ENCODE measurements at regions of chr3 and their contacts with region 1.

Region 1: GRCh38 chr3:44198284-44199269 is 43.1 kb upstream of the TOPAZ1 start:
- DNase-seq: peak; percentile 23 to 68 (median 62)
- ATAC-seq: peak; percentile 83
- H3K4me3 ChIP-seq: no peak overlapping the region
- H3K4me3 Mint-ChIP-seq: no peak overlapping the region
- H3K27ac ChIP-seq: no peak overlapping the region
- H3K27ac Mint-ChIP-seq: no peak overlapping the region
- H3K4me1 ChIP-seq: no peaks in the 10 kb centered on the region
- H3K4me1 Mint-ChIP-seq: no peaks in the 10 kb centered on the region
- H3K27me3 ChIP-seq: no peaks in the 10 kb centered on the region
- H3K27me3 Mint-ChIP-seq: peaks cover 16 to 25% (median 18%) of the 10 kb centered on the region in 5 donors

Region 2: DNA sequence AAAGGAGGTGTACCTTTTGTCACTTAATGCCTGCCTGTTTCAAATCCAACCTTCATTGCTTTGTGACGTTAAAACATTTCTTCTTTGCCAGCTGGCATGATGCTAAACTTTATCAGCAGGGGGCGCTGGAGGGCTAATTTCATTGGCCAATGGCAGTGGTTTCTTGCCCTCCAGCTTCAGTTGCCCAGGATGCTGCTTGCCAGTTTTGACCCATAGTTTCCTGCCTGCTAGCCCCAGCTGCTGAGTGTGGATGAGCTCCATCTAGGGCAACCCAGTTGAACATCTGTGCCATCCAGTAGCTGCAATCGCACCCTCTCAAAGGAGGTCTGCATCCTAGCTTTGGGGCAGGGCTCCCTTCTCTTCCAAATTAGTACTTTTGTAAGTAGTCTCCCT is 1367.3 kb before region 1 on chr3:
- CTCF ChIA-PET with region 1: no interaction called
- POLR2A ChIA-PET with region 1: no interaction called
- intact Hi-C with region 1: loop called in 1 of 2 experiments (anchors 5 kb)
- DNase-seq: peak; percentile 45 to 71 (median 65)
- ATAC-seq: peak; percentile 81
- H3K4me3 ChIP-seq: no peak overlapping the region
- H3K4me3 Mint-ChIP-seq: no peak overlapping the region
- H3K27ac ChIP-seq: no peak overlapping the region
- H3K27ac Mint-ChIP-seq: peak overlapping the region in 1 of 9 donors; percentile 12
- H3K4me1 ChIP-seq: no peaks in the 10 kb centered on the region
- H3K4me1 Mint-ChIP-seq: peaks cover 0 to 14% (median 5%) of the 10 kb centered on the region in 7 donors
- H3K27me3 ChIP-seq: no peaks in the 10 kb centered on the region
- H3K27me3 Mint-ChIP-seq: peaks cover 0 to 18% (median 4%) of the 10 kb centered on the region in 5 donors

Region 3: GRCh38 chr3:43690400-43691119 is 508.0 kb before region 1 on chr3 and contains the start of gene ABHD5:
- CTCF ChIA-PET with region 1: no interaction called
- POLR2A ChIA-PET with region 1: no interaction called
- intact Hi-C with region 1: loop called in 1 of 2 experiments (anchors 2 kb)
- DNase-seq: peak; percentile 94 to 99 (median 96)
- ATAC-seq: peak; percentile 96
- H3K4me3 ChIP-seq: peak within 1 kb of the TSS; percentile 74
- H3K4me3 Mint-ChIP-seq: peak within 1 kb of the TSS; percentile 91 to 98 (median 94)
- H3K27ac ChIP-seq: peak within 1 kb of the TSS; percentile 85
- H3K27ac Mint-ChIP-seq: peak within 1 kb of the TSS; percentile 90 to 97 (median 92)
- H3K4me1 ChIP-seq: peaks cover 8% of the 10 kb centered on the region in 2 donors
- H3K4me1 Mint-ChIP-seq: peaks cover 11 to 47% (median 37%) of the 10 kb centered on the region in 7 donors
- H3K27me3 ChIP-seq: no peaks in the 10 kb centered on the region
- H3K27me3 Mint-ChIP-seq: peaks cover 0 to 6% (median 0%) of the 10 kb centered on the region in 5 donors
- total RNA-seq, gene ABHD5: 6.1 to 21.0 (median 12.1) TPM

Region 4: DNA sequence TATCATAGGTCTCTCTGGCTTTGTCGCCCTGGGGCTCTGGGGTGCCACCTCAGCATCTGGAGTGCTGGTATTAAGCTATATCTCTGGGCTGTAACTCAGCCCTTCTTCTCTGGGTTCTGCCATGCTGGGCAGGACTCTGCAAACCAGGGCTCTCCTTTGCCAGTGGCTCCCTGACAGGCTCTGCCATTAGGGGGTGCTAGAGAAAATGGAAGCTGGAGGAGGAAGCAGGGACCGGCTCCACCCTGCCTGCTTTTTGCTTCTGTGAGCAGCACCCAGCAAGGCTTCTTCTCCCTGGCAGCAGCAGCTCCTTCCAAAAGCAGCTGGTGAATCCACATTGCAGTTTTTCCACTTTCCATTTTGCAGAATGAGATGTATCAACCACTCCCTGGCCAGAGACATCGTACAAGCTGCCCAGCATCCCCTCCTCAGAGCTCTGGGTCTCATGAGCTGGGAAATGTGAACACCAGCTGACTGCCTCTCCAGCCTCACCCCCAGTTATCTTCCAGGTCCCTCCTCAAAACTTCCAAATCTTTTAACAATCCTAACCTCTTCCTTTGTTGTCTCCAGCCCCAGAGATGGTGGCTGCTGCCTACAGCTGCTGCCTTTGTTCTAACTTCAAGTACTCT is 342.8 kb before region 1 on chr3:
- CTCF ChIA-PET with region 1: interaction called, 4 read pairs
- POLR2A ChIA-PET with region 1: no interaction called
- intact Hi-C with region 1: loop called in 1 of 2 experiments (anchors 1 kb)
- DNase-seq: peak in 7 of 9 donors; percentile 12 to 38 (median 24)
- ATAC-seq: peak; percentile 61
- H3K4me3 ChIP-seq: no peak overlapping the region
- H3K4me3 Mint-ChIP-seq: no peak overlapping the region
- H3K27ac ChIP-seq: no peak overlapping the region
- H3K27ac Mint-ChIP-seq: no peak overlapping the region
- H3K4me1 ChIP-seq: no peaks in the 10 kb centered on the region
- H3K4me1 Mint-ChIP-seq: peaks cover 0 to 5% (median 4%) of the 10 kb centered on the region in 7 donors
- H3K27me3 ChIP-seq: no peaks in the 10 kb centered on the region
- H3K27me3 Mint-ChIP-seq: peaks cover 53 to 77% (median 73%) of the 10 kb centered on the region in 5 donors